Naive thymus-derived CD4-positive, alpha-beta T cell (primary cell): ENCODE measurements at regions of chr14 and their contacts with region 1.

Region 1: DNA sequence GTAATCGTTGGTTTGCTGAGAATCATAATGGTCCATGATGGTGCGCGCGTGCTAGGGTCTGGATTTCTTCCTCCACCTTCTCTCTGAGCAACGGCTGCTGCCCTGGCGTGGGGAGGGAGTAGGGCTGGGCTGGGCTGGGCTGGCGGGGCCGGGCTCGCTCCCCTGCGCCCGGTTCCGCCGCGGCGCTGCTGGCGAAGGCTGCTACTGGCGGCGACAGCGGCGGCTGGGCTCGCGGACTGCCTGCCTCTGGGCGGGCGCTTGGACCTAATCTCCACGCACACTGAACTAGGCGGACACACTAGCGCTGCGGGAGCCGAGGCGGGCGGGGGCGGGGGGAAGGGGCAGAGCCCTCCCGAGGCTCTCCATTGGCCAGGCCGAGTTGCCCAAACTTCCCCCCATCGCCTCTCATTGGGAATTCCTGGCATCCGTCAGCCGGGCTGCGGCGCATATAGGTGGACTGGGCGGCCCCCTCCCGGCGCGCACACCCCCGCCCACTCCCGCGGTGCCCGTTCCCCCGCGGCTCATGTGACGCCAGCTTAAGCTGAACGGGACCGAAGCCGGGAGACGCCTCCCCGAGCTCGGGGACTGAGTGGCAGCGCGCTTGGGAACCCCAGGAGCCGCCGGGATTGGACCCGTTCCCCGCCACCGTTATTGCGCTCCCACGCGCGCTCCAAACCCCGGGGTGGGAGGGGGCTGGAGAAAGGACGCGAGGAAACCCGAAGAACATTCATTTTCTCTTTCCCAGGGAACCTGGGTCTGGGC is at the start of gene ACTN1:
- DNase-seq: peak; percentile 46 to 74 (median 70)
- ATAC-seq: peak; percentile 81
- H3K4me3 ChIP-seq: peak within 1 kb of the TSS; percentile 83
- H3K4me3 Mint-ChIP-seq: peak within 1 kb of the TSS; percentile 75 to 98 (median 94)
- H3K27ac ChIP-seq: peak within 1 kb of the TSS; percentile 87
- H3K27ac Mint-ChIP-seq: peak within 1 kb of the TSS; percentile 81 to 100 (median 98)
- H3K4me1 ChIP-seq: peaks cover 5 to 33% of the 10 kb centered on the region in 2 donors
- H3K4me1 Mint-ChIP-seq: peaks cover 29 to 59% (median 47%) of the 10 kb centered on the region in 7 donors
- H3K27me3 ChIP-seq: no peaks in the 10 kb centered on the region
- H3K27me3 Mint-ChIP-seq: peaks cover 0 to 36% (median 0%) of the 10 kb centered on the region in 5 donors
- total RNA-seq, gene ACTN1: 41.3 to 249 (median 227) TPM

Region 2: GRCh38 chr14:68926236-68926635 is 53.0 kb before region 1 on chr14:
- CTCF ChIA-PET with region 1: interaction called, 7 read pairs
- POLR2A ChIA-PET with region 1: interaction called, 6 read pairs
- intact Hi-C with region 1: loop called in 1 of 2 experiments (anchors 1 kb)
- DNase-seq: peak in 3 of 9 donors; percentile 22 to 30 (median 29)
- ATAC-seq: no peak
- H3K4me3 ChIP-seq: no peak overlapping the region
- H3K4me3 Mint-ChIP-seq: peak overlapping the region in 4 of 10 donors; percentile 15 to 82 (median 30)
- H3K27ac ChIP-seq: no peak overlapping the region
- H3K27ac Mint-ChIP-seq: peak overlapping the region in 8 of 9 donors; percentile 86 to 97 (median 90)
- H3K4me1 ChIP-seq: peaks cover 0 to 72% of the 10 kb centered on the region in 2 donors
- H3K4me1 Mint-ChIP-seq: peaks cover 40 to 96% (median 87%) of the 10 kb centered on the region in 7 donors
- H3K27me3 ChIP-seq: no peaks in the 10 kb centered on the region
- H3K27me3 Mint-ChIP-seq: no peaks in the 10 kb centered on the region

Region 3: DNA sequence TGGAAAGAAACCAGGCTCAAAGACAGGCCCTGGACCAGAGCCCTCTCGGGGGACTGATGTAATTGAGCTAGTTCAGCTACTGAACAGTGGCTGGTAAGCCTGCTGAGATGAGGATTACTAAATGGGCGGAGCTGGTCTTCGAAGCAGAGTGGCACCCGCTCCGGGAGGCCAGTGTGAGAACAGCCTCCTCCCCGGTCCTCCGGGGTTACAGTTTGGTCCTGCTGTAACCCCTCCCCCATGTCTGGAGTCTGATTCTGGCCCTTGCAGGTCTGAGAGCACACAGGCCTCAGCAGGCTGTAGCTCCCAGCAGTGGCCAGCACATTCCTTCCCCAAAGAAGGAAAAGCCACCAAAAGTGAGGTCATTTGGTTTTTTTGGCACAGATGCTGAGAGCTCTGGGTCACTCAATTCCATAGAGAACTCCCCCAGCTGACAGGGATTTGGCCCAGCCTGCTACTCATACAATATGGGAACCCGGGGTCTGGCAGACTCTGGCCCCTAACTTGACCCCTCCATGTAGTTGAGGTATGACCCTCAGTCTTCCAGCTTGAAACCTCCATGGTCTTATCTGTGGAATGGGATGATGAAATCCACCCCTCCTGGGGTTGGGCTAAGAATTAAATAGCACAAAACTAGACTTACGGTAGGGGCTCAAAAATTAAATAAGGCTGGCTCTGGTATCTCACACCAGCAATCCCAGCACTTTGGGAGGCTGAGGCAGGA is 39.1 kb before region 1 on chr14:
- CTCF ChIA-PET with region 1: interaction called, 5 read pairs
- POLR2A ChIA-PET with region 1: interaction called, 16 read pairs
- intact Hi-C with region 1: loop called in 1 of 2 experiments (anchors 1 kb)
- DNase-seq: no peak
- ATAC-seq: no peak
- H3K4me3 ChIP-seq: no peak overlapping the region
- H3K4me3 Mint-ChIP-seq: peak overlapping the region in 6 of 10 donors; percentile 8 to 76 (median 32)
- H3K27ac ChIP-seq: peak overlapping the region; percentile 20
- H3K27ac Mint-ChIP-seq: peak overlapping the region in 8 of 9 donors; percentile 44 to 91 (median 85)
- H3K4me1 ChIP-seq: peaks cover 0 to 70% of the 10 kb centered on the region in 2 donors
- H3K4me1 Mint-ChIP-seq: peaks cover 15 to 99% (median 92%) of the 10 kb centered on the region in 7 donors
- H3K27me3 ChIP-seq: no peaks in the 10 kb centered on the region
- H3K27me3 Mint-ChIP-seq: no peaks in the 10 kb centered on the region

Region 4: GRCh38 chr14:68947802-68948201 is 31.4 kb before region 1 on chr14:
- CTCF ChIA-PET with region 1: interaction called, 5 read pairs
- POLR2A ChIA-PET with region 1: interaction called, 18 read pairs
- intact Hi-C with region 1: loop called in 1 of 2 experiments (anchors 1 kb)
- DNase-seq: no peak
- ATAC-seq: no peak
- H3K4me3 ChIP-seq: no peak overlapping the region
- H3K4me3 Mint-ChIP-seq: peak overlapping the region in 8 of 10 donors; percentile 56 to 83 (median 74)
- H3K27ac ChIP-seq: peak overlapping the region; percentile 46
- H3K27ac Mint-ChIP-seq: peak overlapping the region in 8 of 9 donors; percentile 88 to 99 (median 93)
- H3K4me1 ChIP-seq: peaks cover 0 to 73% of the 10 kb centered on the region in 2 donors
- H3K4me1 Mint-ChIP-seq: peaks cover 31 to 97% (median 92%) of the 10 kb centered on the region in 7 donors
- H3K27me3 ChIP-seq: no peaks in the 10 kb centered on the region
- H3K27me3 Mint-ChIP-seq: no peaks in the 10 kb centered on the region

Region 5: GRCh38 chr14:68961781-68962584 is 17.2 kb before region 1 on chr14:
- CTCF ChIA-PET with region 1: interaction called, 5 read pairs
- POLR2A ChIA-PET with region 1: interaction called, 38 read pairs
- intact Hi-C with region 1: loop called in 1 of 2 experiments (anchors 2 kb)
- DNase-seq: no peak
- ATAC-seq: no peak
- H3K4me3 ChIP-seq: no peak overlapping the region
- H3K4me3 Mint-ChIP-seq: peak overlapping the region in 8 of 10 donors; percentile 29 to 96 (median 48)
- H3K27ac ChIP-seq: no peak overlapping the region
- H3K27ac Mint-ChIP-seq: peak overlapping the region in 8 of 9 donors; percentile 84 to 100 (median 92)
- H3K4me1 ChIP-seq: peaks cover 0 to 94% of the 10 kb centered on the region in 2 donors
- H3K4me1 Mint-ChIP-seq: peaks cover 23 to 100% (median 93%) of the 10 kb centered on the region in 7 donors
- H3K27me3 ChIP-seq: no peaks in the 10 kb centered on the region
- H3K27me3 Mint-ChIP-seq: no peaks in the 10 kb centered on the region

Region 6: DNA sequence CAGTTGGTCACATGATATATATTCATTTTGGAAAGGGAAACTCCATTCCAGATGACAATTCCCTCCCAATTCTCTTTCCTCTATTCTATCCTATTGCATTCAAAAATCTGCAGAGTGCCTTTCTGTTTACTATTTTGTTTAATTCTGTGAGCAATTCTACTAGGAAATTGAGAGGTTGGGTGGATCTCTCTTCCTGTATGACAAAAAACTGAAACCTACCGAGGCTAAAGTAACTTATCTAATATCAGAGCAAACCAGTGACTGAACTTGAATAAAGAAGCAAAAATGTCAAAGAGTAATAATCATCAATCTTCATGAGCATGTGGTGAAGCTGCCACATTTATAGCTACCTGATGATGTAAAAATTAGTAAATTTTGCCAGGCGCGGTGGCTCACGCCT is 16.5 kb after region 1 on chr14:
- CTCF ChIA-PET with region 1: no interaction called
- POLR2A ChIA-PET with region 1: interaction called, 4 read pairs
- intact Hi-C with region 1: loop called in 1 of 2 experiments (anchors 2 kb)
- DNase-seq: no peak
- ATAC-seq: no peak
- H3K4me3 ChIP-seq: no peak overlapping the region
- H3K4me3 Mint-ChIP-seq: peak overlapping the region in 9 of 10 donors; percentile 4 to 78 (median 48)
- H3K27ac ChIP-seq: no peak overlapping the region
- H3K27ac Mint-ChIP-seq: peak overlapping the region; percentile 9 to 89 (median 67)
- H3K4me1 ChIP-seq: peaks cover 0 to 7% of the 10 kb centered on the region in 2 donors
- H3K4me1 Mint-ChIP-seq: peaks cover 9 to 32% (median 24%) of the 10 kb centered on the region in 7 donors
- H3K27me3 ChIP-seq: no peaks in the 10 kb centered on the region
- H3K27me3 Mint-ChIP-seq: peaks cover 0 to 8% (median 0%) of the 10 kb centered on the region in 5 donors

Region 7: GRCh38 chr14:69090187-69090789 is 111.1 kb after region 1 on chr14:
- CTCF ChIA-PET with region 1: interaction called, 3 read pairs
- POLR2A ChIA-PET with region 1: no interaction called
- intact Hi-C with region 1: loop called (anchors 2 to 5 kb)
- DNase-seq: peak in 7 of 9 donors; percentile 22 to 47 (median 40)
- ATAC-seq: peak; percentile 74
- H3K4me3 ChIP-seq: no peak overlapping the region
- H3K4me3 Mint-ChIP-seq: no peak overlapping the region
- H3K27ac ChIP-seq: no peak overlapping the region
- H3K27ac Mint-ChIP-seq: peak overlapping the region in 1 of 9 donors; percentile 31
- H3K4me1 ChIP-seq: no peaks in the 10 kb centered on the region
- H3K4me1 Mint-ChIP-seq: peaks cover 6 to 21% (median 12%) of the 10 kb centered on the region in 7 donors
- H3K27me3 ChIP-seq: no peaks in the 10 kb centered on the region
- H3K27me3 Mint-ChIP-seq: no peaks in the 10 kb centered on the region